ENCODE measurements at regions of chr12 and their contacts with region 1.

Region 1: DNA sequence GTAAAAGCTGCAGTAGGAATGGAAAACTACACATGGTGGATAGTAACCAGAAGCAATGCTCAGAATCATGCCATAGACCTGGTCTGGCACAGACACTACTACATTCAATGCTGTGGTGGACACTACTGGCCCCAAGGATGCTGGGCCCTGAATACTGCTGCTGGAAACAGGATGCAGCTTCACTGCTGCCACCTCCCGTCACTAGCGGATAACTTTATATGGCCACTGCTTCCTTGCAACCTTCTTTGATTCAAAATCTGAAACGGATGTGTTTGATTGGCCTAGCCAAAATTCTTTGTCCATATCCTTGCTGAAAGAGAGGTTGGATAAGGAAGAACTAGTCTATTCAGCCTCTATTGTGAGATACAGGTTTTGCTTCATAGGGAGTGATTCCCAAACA is 30.7 kb downstream of the ADCY6 start:
- DNase-seq: no peak
- H3K4me3 ChIP-seq: no peak overlapping the region
- H3K27ac ChIP-seq: no peak overlapping the region
- H3K4me1 ChIP-seq: no peaks in the 10 kb centered on the region
- H3K27me3 ChIP-seq: no peaks in the 10 kb centered on the region
- CTCF ChIP-seq: no peak
- POLR2A ChIP-seq: no peak

Region 2: GRCh38 chr12:48712209-48712608 is 46.0 kb before region 1 on chr12:
- intact Hi-C with region 1: no loop called
- DNase-seq: no peak
- H3K4me3 ChIP-seq: no peak overlapping the region
- H3K27ac ChIP-seq: no peak overlapping the region
- H3K4me1 ChIP-seq: peaks cover 15 to 19% of the 10 kb centered on the region in 2 donors
- H3K27me3 ChIP-seq: no peaks in the 10 kb centered on the region
- CTCF ChIP-seq: no peak
- POLR2A ChIP-seq: no peak

Region 3: DNA sequence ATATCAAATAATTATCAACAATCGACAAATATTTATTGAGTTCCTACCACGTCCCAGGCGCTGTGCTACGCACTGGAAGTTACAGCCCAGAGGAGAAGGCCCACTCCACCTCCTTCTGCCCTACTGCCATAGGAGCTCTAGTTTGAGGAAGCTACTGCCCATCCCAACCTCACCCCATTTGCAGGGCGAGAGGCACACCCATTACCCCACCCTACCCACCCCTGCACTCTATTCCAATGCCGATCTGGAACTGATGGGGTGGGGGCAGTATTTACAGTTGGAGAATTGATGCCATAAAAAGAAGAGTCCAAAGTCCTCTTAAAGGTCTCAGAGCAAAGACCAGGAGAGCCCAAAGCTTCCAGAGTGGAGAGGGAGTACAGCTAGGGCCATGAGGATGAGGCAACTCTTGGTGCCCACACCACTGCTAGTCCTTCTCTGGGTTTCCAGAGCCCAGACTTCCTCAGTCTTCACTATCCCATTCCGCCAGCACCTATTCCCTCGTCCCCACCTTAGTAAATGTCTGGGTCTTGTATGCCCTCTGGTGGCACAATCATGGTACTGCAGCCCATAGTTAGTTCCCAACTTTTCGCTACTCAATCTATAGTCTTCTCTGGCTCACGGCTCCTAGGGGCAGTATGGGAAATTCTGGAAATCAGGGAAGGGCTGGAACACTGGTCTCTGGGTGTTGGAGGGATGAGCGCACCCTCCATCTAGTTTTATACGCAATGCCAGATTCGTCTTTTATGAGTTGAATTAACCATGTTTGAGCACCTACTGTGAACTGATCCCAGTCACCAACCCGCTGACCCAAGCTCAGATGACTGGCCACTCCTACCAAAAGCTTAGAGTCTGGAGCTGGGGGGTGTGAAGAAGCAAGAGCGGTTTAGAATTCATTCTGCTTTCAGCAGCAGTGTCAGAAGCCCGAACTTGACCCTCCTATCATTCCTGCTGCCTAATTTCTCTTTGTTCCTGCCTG is 37.5 kb after region 1 on chr12:
- intact Hi-C with region 1: loop called (anchors 2 kb)
- DNase-seq: peak; percentile 72 to 74
- H3K4me3 ChIP-seq: no peak overlapping the region
- H3K27ac ChIP-seq: no peak overlapping the region
- H3K4me1 ChIP-seq: peaks cover 0 to 3% of the 10 kb centered on the region in 2 donors
- H3K27me3 ChIP-seq: no peaks in the 10 kb centered on the region
- CTCF ChIP-seq: peak; percentile 87 to 98 (median 92)
- POLR2A ChIP-seq: no peak